Activated naive CD4-positive, alpha-beta T cell treated with anti-CD3 and anti-CD28 coated beads for 36 hours (primary cell): ENCODE measurements at regions of chr17 and their contacts with region 1.

Region 1: DNA sequence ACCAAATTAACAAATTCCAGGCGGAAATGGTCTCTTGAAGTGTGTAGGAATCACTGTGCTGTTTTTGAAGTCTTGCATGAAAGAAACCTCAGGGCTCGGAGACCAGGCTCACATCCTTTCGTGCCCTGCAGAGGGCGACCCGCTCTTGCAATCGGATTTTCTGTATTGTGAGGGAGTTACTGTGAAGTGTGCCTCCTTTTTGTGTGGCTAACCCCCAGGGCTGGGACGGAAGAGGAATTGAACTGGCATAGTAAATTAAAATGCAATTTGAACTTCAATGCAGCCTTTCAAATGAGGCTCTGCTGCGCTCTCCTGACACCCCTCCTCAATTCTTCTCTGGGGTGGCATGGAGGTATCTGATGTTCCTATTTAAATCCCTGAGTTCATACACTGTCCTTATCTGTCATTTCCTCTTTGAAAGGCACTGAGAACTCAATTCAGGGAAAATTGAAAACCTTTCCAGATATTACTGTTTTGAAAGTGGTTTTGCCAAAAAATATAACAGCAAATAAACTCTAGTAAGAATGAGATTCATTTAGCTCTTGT is 51.5 kb upstream of the MGAT5B start:
- DNase-seq: peak; percentile 78
- H3K4me3 Mint-ChIP-seq: no peak overlapping the region
- H3K27ac Mint-ChIP-seq: no peak overlapping the region
- H3K4me1 Mint-ChIP-seq: peaks cover 7% of the 10 kb centered on the region
- H3K27me3 Mint-ChIP-seq: no peaks in the 10 kb centered on the region

Region 2: DNA sequence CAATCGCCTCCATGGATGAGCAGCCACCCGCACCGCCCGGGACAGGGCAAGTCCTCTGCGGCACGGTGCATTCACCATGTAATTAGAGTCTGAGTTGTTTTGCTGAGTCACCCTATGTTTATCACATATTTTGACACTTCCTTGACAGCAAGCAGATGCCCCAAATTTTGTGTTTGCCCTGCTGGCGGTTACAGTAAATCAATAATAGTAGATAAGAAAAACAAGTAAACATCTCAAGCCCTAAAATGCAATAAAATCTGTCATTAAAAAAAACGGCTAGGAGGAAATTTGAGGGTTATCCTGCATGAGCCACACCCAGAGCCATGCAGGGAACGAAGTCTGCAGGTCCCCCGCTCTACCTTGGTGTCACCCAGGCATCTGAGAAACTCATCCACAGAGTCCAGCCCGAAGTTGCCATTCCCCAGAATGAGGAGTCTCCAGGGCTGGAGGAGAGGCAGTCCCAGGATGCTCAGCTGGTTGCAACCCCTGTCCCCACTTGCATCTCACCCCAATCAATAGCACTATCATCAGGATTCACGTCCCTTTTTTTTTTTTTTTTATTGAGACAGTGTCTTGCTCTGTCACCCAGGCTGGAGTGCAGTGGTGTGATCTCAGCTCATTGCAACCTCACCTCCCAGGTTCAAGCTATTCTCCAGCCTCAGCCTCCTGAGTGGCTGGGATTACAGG is 156.6 kb before region 1 on chr17:
- CTCF ChIA-PET with region 1: no interaction called
- intact Hi-C with region 1: no loop called
- DNase-seq: no peak
- H3K4me3 Mint-ChIP-seq: no peak overlapping the region
- H3K27ac Mint-ChIP-seq: no peak overlapping the region
- H3K4me1 Mint-ChIP-seq: peaks cover 19% of the 10 kb centered on the region
- H3K27me3 Mint-ChIP-seq: no peaks in the 10 kb centered on the region

Region 3: DNA sequence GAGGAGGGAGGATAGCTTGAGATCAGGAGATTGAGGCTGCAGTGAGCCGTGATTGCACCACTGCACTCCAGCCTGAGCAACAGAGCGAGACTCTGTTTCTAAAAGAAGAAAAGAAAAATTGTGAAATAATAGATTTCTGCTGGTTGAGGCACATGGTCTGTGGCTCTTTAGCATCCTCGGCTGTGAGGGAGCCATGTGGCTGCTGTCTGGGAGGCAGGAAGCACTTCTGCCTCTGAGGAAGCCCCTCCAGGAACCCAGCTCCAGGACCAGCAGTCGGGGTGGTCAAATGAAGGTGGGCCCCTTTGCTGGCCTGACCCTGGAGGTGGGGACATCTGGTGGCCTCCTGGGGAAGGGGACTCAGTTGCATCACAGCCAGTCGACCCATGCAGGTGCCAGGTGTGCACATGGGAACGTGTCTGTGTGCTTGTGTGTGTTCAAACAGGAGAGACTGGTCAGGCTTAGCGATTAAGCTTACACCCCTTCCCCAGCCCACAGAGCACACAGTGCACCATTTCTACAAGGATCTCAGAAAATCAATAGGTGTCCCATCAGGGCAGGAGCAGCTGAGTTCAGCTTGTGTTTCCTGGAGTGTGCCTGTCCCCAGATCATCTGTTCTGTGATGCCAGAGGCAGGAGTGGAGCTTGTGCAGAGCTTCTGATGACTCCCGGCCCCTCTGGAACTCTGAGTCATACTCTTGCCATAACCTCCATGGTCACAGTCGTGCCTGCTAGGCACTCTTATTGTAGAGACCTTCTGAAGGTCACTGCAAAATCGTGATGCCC is 27.2 kb after region 1 on chr17:
- CTCF ChIA-PET with region 1: no interaction called
- intact Hi-C with region 1: loop called (anchors 1 kb)
- DNase-seq: no peak
- H3K4me3 Mint-ChIP-seq: no peak overlapping the region
- H3K27ac Mint-ChIP-seq: no peak overlapping the region
- H3K4me1 Mint-ChIP-seq: peaks cover 11% of the 10 kb centered on the region
- H3K27me3 Mint-ChIP-seq: peaks cover 57% of the 10 kb centered on the region

Region 4: DNA sequence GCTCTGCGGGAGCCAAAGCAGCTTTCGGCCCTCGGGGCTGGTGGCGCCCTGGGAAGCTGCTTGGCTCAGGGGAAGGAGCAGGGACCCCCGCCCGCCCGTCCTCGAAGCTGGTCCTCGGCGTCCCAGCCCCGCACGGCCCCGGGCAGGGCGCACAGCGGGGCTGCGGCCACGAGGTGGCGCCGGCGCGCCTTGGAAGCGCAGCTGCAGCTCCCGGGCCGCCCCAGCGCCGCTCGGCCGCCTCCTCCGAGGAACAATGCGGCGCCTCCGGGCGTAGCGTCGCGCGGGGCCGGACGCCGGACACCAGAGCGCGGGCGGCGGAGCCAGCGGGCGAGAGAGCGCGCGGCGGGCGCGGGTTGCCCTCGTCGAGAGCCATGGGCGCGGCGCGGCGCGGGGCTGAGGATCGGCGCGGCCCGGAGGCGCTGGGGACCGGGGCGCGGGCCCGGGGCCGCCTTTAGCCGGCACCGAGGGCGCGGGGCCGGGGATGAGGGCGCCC is 51.6 kb after region 1 on chr17 and contains the start of gene MGAT5B:
- CTCF ChIA-PET with region 1: interaction called, 5 read pairs
- intact Hi-C with region 1: loop called (anchors 5 kb)
- DNase-seq: peak; percentile 73
- H3K4me3 Mint-ChIP-seq: peak within 1 kb of the TSS; percentile 59
- H3K27ac Mint-ChIP-seq: no peak within 1 kb of the TSS
- H3K4me1 Mint-ChIP-seq: peaks cover 7% of the 10 kb centered on the region
- H3K27me3 Mint-ChIP-seq: peaks cover 21% of the 10 kb centered on the region
- total RNA-seq, gene MGAT5B: 0.19 TPM in 1 of 2 experiments, not detected in the other

Region 5: DNA sequence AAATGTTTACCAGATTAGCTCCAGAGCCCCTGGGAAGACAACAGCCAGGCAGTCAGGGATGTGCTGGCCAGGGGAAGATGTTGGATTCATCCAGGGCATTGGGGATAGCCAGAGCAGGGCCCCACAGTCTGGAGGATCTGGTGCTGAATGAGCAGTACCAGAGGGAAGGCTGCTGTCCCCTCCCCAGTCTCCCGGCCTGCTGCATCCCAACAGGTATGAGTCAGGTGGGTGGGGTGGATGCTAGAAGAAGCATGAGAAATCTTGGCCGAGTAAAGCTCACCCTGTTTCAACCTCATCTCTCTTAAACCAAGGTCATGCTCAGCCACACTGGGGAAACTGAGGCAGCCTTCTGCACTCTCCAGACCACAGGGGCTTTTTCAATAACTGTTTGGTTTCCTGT is 252.3 kb after region 1 on chr17:
- CTCF ChIA-PET with region 1: no interaction called
- intact Hi-C with region 1: loop called (anchors 1 kb)
- DNase-seq: no peak
- H3K4me3 Mint-ChIP-seq: no peak overlapping the region
- H3K27ac Mint-ChIP-seq: no peak overlapping the region
- H3K4me1 Mint-ChIP-seq: peaks cover 1% of the 10 kb centered on the region
- H3K27me3 Mint-ChIP-seq: peaks cover 20% of the 10 kb centered on the region

Region 6: GRCh38 chr17:77227461-77228237 is 411.0 kb after region 1 on chr17:
- CTCF ChIA-PET with region 1: no interaction called
- intact Hi-C with region 1: no loop called
- DNase-seq: no peak
- H3K4me3 Mint-ChIP-seq: no peak overlapping the region
- H3K27ac Mint-ChIP-seq: no peak overlapping the region
- H3K4me1 Mint-ChIP-seq: no peaks in the 10 kb centered on the region
- H3K27me3 Mint-ChIP-seq: no peaks in the 10 kb centered on the region